ENCODE measurements at regions of chr1 and their contacts with region 1.

Region 1: GRCh38 chr1:113140588-113141446 is 67.8 kb downstream of the LRIG2 start:
- DNase-seq: peak; percentile 40 to 51 (median 45)
- H3K4me3 ChIP-seq: no peak overlapping the region
- H3K4me3 Mint-ChIP-seq: peak overlapping the region in 1 of 8 donors; percentile 39
- H3K27ac ChIP-seq: no peak overlapping the region
- H3K27ac Mint-ChIP-seq: peak overlapping the region in 3 of 7 donors; percentile 63 to 84 (median 68)
- H3K4me1 ChIP-seq: peaks cover 13% of the 10 kb centered on the region
- H3K4me1 Mint-ChIP-seq: peaks cover 13 to 24% (median 17%) of the 10 kb centered on the region in 4 donors
- H3K27me3 ChIP-seq: no peaks in the 10 kb centered on the region
- H3K27me3 Mint-ChIP-seq: no peaks in the 10 kb centered on the region

Region 2: GRCh38 chr1:113129529-113130185 is 11.2 kb before region 1 on chr1:
- CTCF ChIA-PET with region 1: interaction called, 17 read pairs
- POLR2A ChIA-PET with region 1: no interaction called
- intact Hi-C with region 1: no loop called
- DNase-seq: no peak
- H3K4me3 ChIP-seq: no peak overlapping the region
- H3K4me3 Mint-ChIP-seq: no peak overlapping the region
- H3K27ac ChIP-seq: no peak overlapping the region
- H3K27ac Mint-ChIP-seq: peak overlapping the region in 2 of 7 donors; percentile 18 to 62
- H3K4me1 ChIP-seq: peaks cover 4% of the 10 kb centered on the region
- H3K4me1 Mint-ChIP-seq: peaks cover 11 to 31% (median 12%) of the 10 kb centered on the region in 4 donors
- H3K27me3 ChIP-seq: no peaks in the 10 kb centered on the region
- H3K27me3 Mint-ChIP-seq: no peaks in the 10 kb centered on the region

Region 3: DNA sequence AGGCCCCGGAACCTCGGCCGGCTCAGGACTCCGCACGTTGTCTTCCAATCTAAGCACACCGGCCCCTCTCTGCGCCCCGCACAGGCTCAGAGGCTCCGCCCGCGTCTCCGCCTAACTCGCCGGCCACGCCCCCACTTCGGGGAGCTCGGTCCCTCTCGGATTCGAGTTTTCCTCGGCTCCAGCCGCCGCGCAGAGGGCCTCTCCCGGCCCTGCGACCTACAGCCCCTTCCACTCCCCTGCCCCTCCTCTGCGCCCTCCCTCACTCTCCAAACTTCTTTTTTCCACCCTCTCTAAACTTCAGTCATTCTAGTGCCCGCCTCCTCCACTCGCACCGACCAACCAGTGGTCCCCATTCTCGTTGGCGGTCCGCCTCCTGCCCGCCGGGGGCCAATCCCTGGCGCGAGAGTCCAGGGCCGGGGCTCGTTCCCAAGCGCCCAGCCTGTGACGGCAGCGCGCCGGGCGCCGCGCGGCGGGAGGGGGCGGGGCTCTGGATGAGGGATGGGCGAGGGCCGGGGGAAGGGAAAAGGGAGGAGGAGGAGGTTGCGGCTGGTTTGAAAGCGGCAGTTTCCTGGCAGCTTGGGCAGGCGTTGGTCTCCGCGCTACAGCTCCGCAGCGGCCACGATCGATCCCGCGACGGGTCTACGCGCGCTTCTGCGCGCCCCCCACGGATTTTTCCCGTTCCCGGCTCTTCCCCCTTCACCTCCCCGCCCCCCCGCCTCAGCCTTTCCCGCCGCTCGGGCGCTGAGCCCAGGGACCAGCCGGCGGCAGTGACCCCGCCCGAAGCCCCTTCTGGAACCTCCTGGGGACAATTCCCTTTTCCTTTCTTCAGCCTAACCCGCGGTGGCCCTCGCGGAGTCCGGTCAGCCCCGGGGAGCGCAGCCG is 249.4 kb after region 1 on chr1 and contains the start of gene MAGI3:
- CTCF ChIA-PET with region 1: interaction called, 3 read pairs
- POLR2A ChIA-PET with region 1: no interaction called
- intact Hi-C with region 1: loop called (anchors 10 kb)
- DNase-seq: peak; percentile 92 to 94 (median 93)
- H3K4me3 ChIP-seq: peak within 1 kb of the TSS; percentile 44 to 89
- H3K4me3 Mint-ChIP-seq: peak within 1 kb of the TSS; percentile 88 to 98 (median 92)
- H3K27ac ChIP-seq: peak within 1 kb of the TSS; percentile 60
- H3K27ac Mint-ChIP-seq: peak within 1 kb of the TSS; percentile 80 to 95 (median 91)
- H3K4me1 ChIP-seq: peaks cover 30% of the 10 kb centered on the region
- H3K4me1 Mint-ChIP-seq: peaks cover 20 to 36% (median 23%) of the 10 kb centered on the region in 4 donors
- H3K27me3 ChIP-seq: no peaks in the 10 kb centered on the region
- H3K27me3 Mint-ChIP-seq: no peaks in the 10 kb centered on the region
- total RNA-seq, gene MAGI3: 6.5 to 6.7 TPM

Region 4: GRCh38 chr1:113452921-113453770 is 312.3 kb after region 1 on chr1:
- CTCF ChIA-PET with region 1: interaction called, 25 read pairs
- POLR2A ChIA-PET with region 1: no interaction called
- intact Hi-C with region 1: no loop called
- DNase-seq: peak in 4 of 5 donors; percentile 9 to 15 (median 11)
- H3K4me3 ChIP-seq: no peak overlapping the region
- H3K4me3 Mint-ChIP-seq: no peak overlapping the region
- H3K27ac ChIP-seq: no peak overlapping the region
- H3K27ac Mint-ChIP-seq: no peak overlapping the region
- H3K4me1 ChIP-seq: no peaks in the 10 kb centered on the region
- H3K4me1 Mint-ChIP-seq: peaks cover 0 to 11% (median 7%) of the 10 kb centered on the region in 4 donors
- H3K27me3 ChIP-seq: no peaks in the 10 kb centered on the region
- H3K27me3 Mint-ChIP-seq: no peaks in the 10 kb centered on the region

Region 5: GRCh38 chr1:113677250-113678158 is 536.7 kb after region 1 on chr1:
- CTCF ChIA-PET with region 1: interaction called, 75 read pairs
- POLR2A ChIA-PET with region 1: no interaction called
- intact Hi-C with region 1: loop called (anchors 1 kb)
- DNase-seq: peak in 4 of 5 donors; percentile 16 to 29 (median 28)
- H3K4me3 ChIP-seq: no peak overlapping the region
- H3K4me3 Mint-ChIP-seq: no peak overlapping the region
- H3K27ac ChIP-seq: no peak overlapping the region
- H3K27ac Mint-ChIP-seq: no peak overlapping the region
- H3K4me1 ChIP-seq: no peaks in the 10 kb centered on the region
- H3K4me1 Mint-ChIP-seq: peaks cover 0 to 2% (median under 1%) of the 10 kb centered on the region in 4 donors
- H3K27me3 ChIP-seq: no peaks in the 10 kb centered on the region
- H3K27me3 Mint-ChIP-seq: no peaks in the 10 kb centered on the region

Region 6: GRCh38 chr1:114282751-114283403 is 1142.1 kb after region 1 on chr1:
- CTCF ChIA-PET with region 1: interaction called, 14 read pairs
- POLR2A ChIA-PET with region 1: no interaction called
- intact Hi-C with region 1: loop called (anchors 2 kb)
- DNase-seq: peak; percentile 76 to 81 (median 78)
- H3K4me3 ChIP-seq: no peak overlapping the region
- H3K4me3 Mint-ChIP-seq: no peak overlapping the region
- H3K27ac ChIP-seq: no peak overlapping the region
- H3K27ac Mint-ChIP-seq: no peak overlapping the region
- H3K4me1 ChIP-seq: no peaks in the 10 kb centered on the region
- H3K4me1 Mint-ChIP-seq: peaks cover 0 to 5% (median under 1%) of the 10 kb centered on the region in 4 donors
- H3K27me3 ChIP-seq: no peaks in the 10 kb centered on the region
- H3K27me3 Mint-ChIP-seq: peaks cover 0 to 1% of the 10 kb centered on the region in 2 donors

Measured in CD4-positive, alpha-beta memory T cell (primary cell).